ENCODE measurements at regions of chr7 and their contacts with region 1.

Region 1: GRCh38 chr7:24572997-24573625 is at the start of gene PALS2:
- DNase-seq: peak; percentile 81 to 87 (median 83)
- H3K4me3 ChIP-seq: peak within 1 kb of the TSS; percentile 62 to 66
- H3K4me3 Mint-ChIP-seq: peak within 1 kb of the TSS; percentile 92 to 99 (median 94)
- H3K27ac ChIP-seq: peak within 1 kb of the TSS; percentile 56
- H3K27ac Mint-ChIP-seq: peak within 1 kb of the TSS; percentile 86 to 95 (median 92)
- H3K4me1 ChIP-seq: peaks cover 32% of the 10 kb centered on the region
- H3K4me1 Mint-ChIP-seq: peaks cover 20 to 38% (median 28%) of the 10 kb centered on the region in 4 donors
- H3K27me3 ChIP-seq: no peaks in the 10 kb centered on the region
- H3K27me3 Mint-ChIP-seq: peaks cover 2 to 4% of the 10 kb centered on the region in 2 donors
- total RNA-seq, gene PALS2: 32.9 to 50.1 TPM

Region 2: DNA sequence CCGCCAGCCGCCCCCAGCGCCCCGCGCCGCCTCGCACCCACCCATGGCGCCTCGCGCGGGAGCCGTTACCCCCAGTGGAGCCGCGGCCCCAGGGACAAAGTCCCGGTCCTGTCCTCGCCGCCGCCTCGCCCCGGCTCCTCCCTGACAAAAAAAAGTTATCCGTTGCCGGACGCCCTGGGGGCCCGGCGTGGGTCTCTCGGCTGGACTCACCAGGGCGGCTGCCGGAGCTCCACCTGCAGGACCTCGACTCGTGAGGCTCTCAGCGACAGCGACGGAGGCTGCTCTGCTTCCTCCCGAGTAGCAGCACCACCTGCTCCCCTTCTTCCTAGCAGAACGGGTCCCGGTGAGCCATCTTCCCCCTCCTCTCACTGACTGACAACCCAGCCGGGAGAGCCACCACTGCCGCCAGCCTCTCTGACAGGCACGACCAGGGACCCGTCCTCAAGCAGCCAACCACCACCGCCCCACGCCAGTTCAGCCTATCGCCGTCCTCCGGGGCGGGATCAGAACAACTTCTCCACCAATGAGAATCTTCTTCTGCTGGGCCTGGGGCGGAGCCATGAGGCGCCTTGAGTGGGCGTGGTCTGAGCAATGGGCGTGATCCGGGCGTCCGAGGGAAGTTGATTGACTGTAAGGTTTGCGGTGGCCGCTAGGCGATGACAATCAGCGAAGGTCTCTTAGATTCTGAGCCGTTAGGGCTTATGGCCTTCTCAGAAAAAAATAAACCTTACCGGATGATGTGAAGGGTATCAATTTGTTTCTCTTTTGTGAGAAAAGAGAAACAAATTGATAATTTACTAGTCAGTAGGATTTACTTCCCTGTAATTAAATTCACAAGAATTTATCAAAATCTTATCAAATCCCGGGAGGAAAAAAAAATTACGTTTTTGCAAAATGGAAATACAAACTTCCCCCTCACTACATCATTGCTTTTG is 1559.1 kb before region 1 on chr7 and contains the start of gene HYCC1:
- CTCF ChIA-PET with region 1: no interaction called
- POLR2A ChIA-PET with region 1: no interaction called
- intact Hi-C with region 1: loop called (anchors 10 kb)
- DNase-seq: peak; percentile 99 to 100 (median 100)
- H3K4me3 ChIP-seq: peak within 1 kb of the TSS; percentile 55 to 76
- H3K4me3 Mint-ChIP-seq: peak within 1 kb of the TSS; percentile 94 to 99 (median 97)
- H3K27ac ChIP-seq: peak within 1 kb of the TSS; percentile 58
- H3K27ac Mint-ChIP-seq: peak within 1 kb of the TSS; percentile 88 to 99 (median 93)
- H3K4me1 ChIP-seq: peaks cover 49% of the 10 kb centered on the region
- H3K4me1 Mint-ChIP-seq: peaks cover 12 to 28% (median 24%) of the 10 kb centered on the region in 4 donors
- H3K27me3 ChIP-seq: no peaks in the 10 kb centered on the region
- H3K27me3 Mint-ChIP-seq: peaks cover 0 to 2% of the 10 kb centered on the region in 2 donors
- total RNA-seq, gene HYCC1: 16.2 to 19.6 TPM

Region 3: DNA sequence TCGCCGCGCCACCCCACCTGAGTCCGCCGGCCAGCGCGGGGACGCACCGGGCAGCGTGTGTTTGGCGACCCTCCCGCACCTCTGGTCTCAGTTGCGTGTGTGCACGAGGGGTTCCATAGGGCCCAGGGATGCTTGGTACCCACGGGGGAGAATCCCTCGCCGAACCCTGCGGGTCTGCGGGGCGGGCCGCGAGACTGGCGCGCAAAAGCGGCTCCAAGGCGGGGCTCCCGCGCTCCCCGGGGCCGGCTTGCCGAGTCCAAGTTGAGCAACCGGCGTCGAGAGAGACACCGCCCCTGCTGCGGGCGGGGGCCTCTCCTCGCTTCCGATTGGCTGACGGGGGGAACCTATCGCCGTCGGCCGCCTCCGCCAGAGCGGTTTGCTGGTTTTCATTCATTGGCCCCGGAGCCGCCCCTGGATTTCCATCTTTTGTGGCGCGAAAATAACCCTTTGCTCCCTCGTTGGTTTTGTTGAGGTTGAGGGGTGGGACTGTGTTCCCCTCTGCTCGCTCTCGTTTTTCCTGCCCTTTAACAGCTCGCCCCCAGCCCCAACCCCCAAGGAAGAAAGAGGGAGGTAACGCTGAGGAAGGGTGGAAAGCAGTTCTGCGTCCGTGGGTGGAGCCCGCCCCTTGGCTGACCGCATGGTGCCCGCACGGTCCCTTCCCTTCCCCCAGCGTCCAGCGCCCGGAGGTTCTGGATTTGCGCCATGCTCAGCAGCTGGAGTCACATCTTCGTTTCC is 1098.8 kb before region 1 on chr7:
- CTCF ChIA-PET with region 1: no interaction called
- POLR2A ChIA-PET with region 1: no interaction called
- intact Hi-C with region 1: loop called (anchors 10 kb)
- DNase-seq: peak in 4 of 5 donors; percentile 26 to 34 (median 28)
- H3K4me3 ChIP-seq: peak overlapping the region in 1 of 2 donors; percentile 3
- H3K4me3 Mint-ChIP-seq: peak overlapping the region in 6 of 8 donors; percentile 34 to 65 (median 58)
- H3K27ac ChIP-seq: no peak overlapping the region
- H3K27ac Mint-ChIP-seq: peak overlapping the region in 3 of 7 donors; percentile 70 to 88 (median 76)
- H3K4me1 ChIP-seq: peaks cover 37% of the 10 kb centered on the region
- H3K4me1 Mint-ChIP-seq: peaks cover 9 to 33% (median 21%) of the 10 kb centered on the region in 4 donors
- H3K27me3 ChIP-seq: peaks cover 81% of the 10 kb centered on the region
- H3K27me3 Mint-ChIP-seq: peaks cover 47 to 62% of the 10 kb centered on the region in 2 donors

Region 4: DNA sequence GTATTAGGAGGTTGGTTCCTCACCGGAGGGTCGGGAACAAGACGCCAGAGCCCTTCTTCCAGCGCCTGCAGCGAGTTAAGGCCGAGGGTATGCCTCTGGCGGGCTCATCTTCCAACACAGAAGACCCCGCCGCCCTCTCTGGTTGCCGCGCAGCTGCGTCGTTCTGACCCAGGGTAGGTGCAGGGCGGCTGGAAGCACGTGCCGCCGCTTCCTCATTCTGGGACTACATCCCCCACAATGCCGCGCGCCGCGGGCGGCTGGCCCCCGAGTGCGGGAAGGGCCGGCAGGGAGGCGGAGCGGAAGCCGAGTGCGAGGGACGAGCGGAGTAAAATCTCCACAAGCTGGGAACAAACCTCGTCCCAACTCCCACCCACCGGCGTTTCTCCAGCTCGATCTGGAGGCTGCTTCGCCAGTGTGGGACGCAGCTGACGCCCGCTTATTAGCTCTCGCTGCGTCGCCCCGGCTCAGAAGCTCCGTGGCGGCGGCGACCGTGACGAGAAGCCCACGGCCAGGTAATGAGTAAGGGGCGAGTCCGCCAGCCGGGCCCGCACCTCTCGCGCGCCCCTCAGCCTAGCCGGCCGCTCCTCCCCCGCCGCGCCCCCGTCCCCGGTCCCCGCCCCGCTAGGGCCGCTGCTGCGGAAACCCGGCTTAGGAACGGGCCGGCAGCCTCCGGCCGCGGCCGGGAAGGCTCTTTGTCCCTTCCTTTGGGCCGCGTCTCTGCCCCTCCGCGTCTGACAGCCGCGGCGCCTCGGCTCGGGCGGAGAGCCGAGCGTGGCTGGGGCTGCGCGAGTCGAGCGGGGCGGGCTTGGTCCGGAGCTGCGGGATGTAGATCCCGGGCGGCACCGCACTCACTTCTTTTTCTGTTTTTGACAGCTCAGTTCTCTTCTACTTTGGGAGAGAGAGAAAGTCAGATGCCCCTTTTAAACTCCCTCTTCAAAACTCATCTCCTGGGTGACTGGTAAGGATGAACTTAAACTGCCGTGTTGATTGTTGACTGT is 975.7 kb before region 1 on chr7 and contains the start of gene CCDC126:
- CTCF ChIA-PET with region 1: no interaction called
- POLR2A ChIA-PET with region 1: no interaction called
- intact Hi-C with region 1: loop called (anchors 1 kb)
- DNase-seq: peak; percentile 73 to 80 (median 74)
- H3K4me3 ChIP-seq: peak within 1 kb of the TSS; percentile 61 to 67
- H3K4me3 Mint-ChIP-seq: peak within 1 kb of the TSS; percentile 86 to 96 (median 92)
- H3K27ac ChIP-seq: peak within 1 kb of the TSS; percentile 79
- H3K27ac Mint-ChIP-seq: peak within 1 kb of the TSS; percentile 47 to 91 (median 88)
- H3K4me1 ChIP-seq: peaks cover 19% of the 10 kb centered on the region
- H3K4me1 Mint-ChIP-seq: peaks cover 21 to 40% (median 35%) of the 10 kb centered on the region in 4 donors
- H3K27me3 ChIP-seq: no peaks in the 10 kb centered on the region
- H3K27me3 Mint-ChIP-seq: no peaks in the 10 kb centered on the region
- total RNA-seq, gene CCDC126: 15.5 to 17.7 TPM

Region 5: GRCh38 chr7:24617957-24618616 is 45.0 kb after region 1 on chr7:
- CTCF ChIA-PET with region 1: no interaction called
- POLR2A ChIA-PET with region 1: no interaction called
- intact Hi-C with region 1: no loop called
- DNase-seq: peak in 1 of 5 donors; percentile 32
- H3K4me3 ChIP-seq: no peak overlapping the region
- H3K4me3 Mint-ChIP-seq: no peak overlapping the region
- H3K27ac ChIP-seq: no peak overlapping the region
- H3K27ac Mint-ChIP-seq: no peak overlapping the region
- H3K4me1 ChIP-seq: no peaks in the 10 kb centered on the region
- H3K4me1 Mint-ChIP-seq: peaks cover 7 to 16% (median 9%) of the 10 kb centered on the region in 4 donors
- H3K27me3 ChIP-seq: no peaks in the 10 kb centered on the region
- H3K27me3 Mint-ChIP-seq: no peaks in the 10 kb centered on the region

Region 6: DNA sequence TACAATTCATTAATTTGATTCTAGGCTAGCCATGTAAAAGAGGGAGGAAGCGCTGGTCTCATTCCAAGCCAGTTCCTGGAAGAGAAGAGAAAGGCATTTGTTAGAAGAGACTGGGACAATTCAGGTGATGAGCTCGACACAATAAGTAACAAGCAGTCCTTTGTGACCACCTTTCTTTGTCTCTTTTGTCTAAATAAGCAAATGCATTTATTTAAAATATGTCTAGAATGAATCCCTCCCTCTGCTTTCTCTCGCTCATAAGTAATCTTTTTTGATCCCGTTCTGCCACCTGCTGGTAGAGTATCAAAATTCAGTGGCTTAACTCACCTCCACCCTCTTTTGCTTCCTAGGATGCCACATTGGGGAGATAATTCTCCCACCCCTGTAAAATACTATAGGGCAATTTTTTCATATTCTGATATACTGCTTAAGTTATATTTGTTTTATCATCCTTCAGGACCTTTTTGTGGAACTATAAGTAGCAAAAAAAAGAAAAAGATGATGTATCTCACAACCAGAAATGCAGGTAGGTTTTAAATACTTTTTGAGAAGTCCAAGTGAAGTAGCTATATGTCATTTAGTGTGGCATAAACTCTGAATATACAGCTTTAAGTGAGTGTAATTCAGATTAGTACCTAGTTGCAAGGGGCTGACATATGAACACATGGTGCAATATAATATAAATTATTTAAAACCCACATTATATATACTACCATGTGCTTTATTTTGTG is 92.6 kb after region 1 on chr7:
- CTCF ChIA-PET with region 1: interaction called, 13 read pairs
- POLR2A ChIA-PET with region 1: no interaction called
- intact Hi-C with region 1: loop called (anchors 2 kb)
- DNase-seq: peak; percentile 31 to 47 (median 42)
- H3K4me3 ChIP-seq: no peak overlapping the region
- H3K4me3 Mint-ChIP-seq: no peak overlapping the region
- H3K27ac ChIP-seq: no peak overlapping the region
- H3K27ac Mint-ChIP-seq: no peak overlapping the region
- H3K4me1 ChIP-seq: no peaks in the 10 kb centered on the region
- H3K4me1 Mint-ChIP-seq: no peaks in the 10 kb centered on the region
- H3K27me3 ChIP-seq: no peaks in the 10 kb centered on the region
- H3K27me3 Mint-ChIP-seq: no peaks in the 10 kb centered on the region

Region 7: DNA sequence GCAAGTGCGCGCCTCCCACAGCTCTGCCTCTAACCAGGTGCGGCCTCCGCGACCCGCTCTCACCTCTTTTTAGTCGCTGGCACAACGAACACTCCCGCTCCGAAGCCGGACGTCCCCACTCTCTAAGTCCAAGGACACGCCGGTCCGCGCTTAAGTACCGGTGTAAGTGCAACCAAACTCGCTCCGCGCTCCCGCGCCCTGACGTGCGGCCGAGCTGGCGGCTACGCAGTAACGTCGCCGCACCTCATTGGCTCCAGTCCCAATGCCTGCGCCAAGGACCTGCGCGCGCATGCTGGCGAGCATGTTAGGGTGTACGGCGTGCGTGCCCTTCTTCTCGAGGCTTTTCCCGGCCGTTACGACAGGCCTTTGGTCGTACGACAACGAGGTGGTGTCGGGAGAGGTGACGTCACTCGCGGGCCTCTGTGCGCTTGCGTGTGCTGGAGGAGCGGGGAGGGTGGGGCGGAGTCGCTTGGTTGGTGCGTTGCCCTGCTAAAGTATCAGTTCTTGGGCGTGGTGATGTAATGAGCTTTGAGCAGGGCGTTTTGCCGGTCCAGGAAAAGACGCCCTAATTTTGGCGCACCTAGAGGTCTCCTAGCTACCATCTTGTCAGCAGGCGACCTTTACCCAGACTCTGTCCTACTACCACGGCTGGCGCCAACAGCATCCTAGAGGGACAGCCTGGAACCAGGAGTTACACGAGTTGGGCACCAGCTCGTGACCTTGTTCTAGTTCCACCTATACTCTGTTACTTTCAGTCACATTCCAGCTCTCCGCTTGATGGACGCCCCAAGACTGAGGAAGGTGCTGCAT is 552.2 kb after region 1 on chr7 and contains the start of gene CYCS:
- CTCF ChIA-PET with region 1: no interaction called
- POLR2A ChIA-PET with region 1: interaction called, 9 read pairs
- intact Hi-C with region 1: loop called (anchors 10 kb)
- DNase-seq: peak; percentile 99 to 100 (median 99)
- H3K4me3 ChIP-seq: peak within 1 kb of the TSS; percentile 72 to 82
- H3K4me3 Mint-ChIP-seq: peak within 1 kb of the TSS; percentile 97 to 100 (median 100)
- H3K27ac ChIP-seq: peak within 1 kb of the TSS; percentile 97
- H3K27ac Mint-ChIP-seq: peak within 1 kb of the TSS; percentile 96 to 100 (median 100)
- H3K4me1 ChIP-seq: peaks cover 9% of the 10 kb centered on the region
- H3K4me1 Mint-ChIP-seq: peaks cover 14 to 26% (median 15%) of the 10 kb centered on the region in 4 donors
- H3K27me3 ChIP-seq: no peaks in the 10 kb centered on the region
- H3K27me3 Mint-ChIP-seq: no peaks in the 10 kb centered on the region
- total RNA-seq, gene CYCS: 46.9 to 54.2 TPM